A549 (cell line): ENCODE measurements at regions of chr16 and their contacts with region 1.

Region 1: GRCh38 chr16:46929378-46930332 is 43.8 kb downstream of the DNAJA2 start:
- DNase-seq: peak; percentile 62 to 81
- ATAC-seq: peak; percentile 86 to 96
- H3K4me3 ChIP-seq: no peak overlapping the region
- H3K27ac ChIP-seq: no peak overlapping the region
- H3K4me1 ChIP-seq: no peaks in the 10 kb centered on the region
- CTCF ChIP-seq: peak; percentile 83
- EP300 ChIP-seq: no peak
- POLR2A ChIP-seq: no peak
- RAD21 ChIP-seq: peak; percentile 67 to 68

Region 2: GRCh38 chr16:46862555-46863447 is 66.9 kb before region 1 on chr16:
- CTCF ChIA-PET with region 1: interaction called, 13 read pairs
- POLR2A ChIA-PET with region 1: no interaction called
- DNase-seq: no peak
- ATAC-seq: no peak
- H3K4me3 ChIP-seq: no peak overlapping the region
- H3K27ac ChIP-seq: no peak overlapping the region
- H3K4me1 ChIP-seq: peaks cover 24% of the 10 kb centered on the region
- CTCF ChIP-seq: no peak
- EP300 ChIP-seq: no peak
- POLR2A ChIP-seq: no peak
- RAD21 ChIP-seq: no peak

Region 3: DNA sequence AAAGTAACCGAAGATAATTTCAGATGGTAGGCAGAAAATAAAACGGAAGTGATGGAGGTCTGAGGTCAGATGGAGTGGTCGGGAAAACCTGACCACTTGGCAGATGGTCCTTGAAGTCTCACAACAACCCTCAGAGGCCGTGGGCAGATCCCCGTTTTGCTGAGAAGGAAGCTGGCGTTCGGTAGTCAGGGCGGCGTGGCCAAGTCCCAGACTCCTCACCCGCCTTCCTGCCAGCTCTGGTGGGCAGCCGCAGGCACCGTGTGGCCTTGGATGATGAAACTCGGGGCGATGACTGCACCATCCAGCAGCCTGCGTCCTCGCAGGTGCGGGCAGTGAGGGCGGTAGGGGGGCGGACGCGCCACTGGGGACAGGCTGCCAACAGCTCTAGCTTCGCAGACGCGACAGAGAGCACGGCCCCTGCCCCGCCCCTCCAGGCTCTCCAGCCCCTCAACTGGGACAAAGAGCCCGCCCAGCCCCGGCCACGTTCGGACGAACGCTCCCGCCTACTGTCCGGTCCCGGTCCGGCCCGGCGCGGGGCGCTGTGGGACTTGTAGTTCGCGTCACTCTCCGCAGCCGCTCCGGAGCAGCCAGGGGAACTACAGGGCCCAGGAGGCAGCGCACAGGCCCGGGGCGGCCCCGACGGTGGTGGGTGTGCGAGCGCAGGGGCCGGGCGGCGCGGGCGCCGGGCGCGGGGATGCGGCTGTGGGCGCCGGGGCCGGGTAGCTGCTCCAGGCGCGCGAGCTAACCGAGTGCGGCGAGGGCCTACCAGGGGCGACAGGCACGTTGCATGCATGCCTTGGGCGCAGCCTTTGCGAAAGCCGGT is 45.8 kb before region 1 on chr16 and contains the start of gene GPT2:
- CTCF ChIA-PET with region 1: interaction called, 14 read pairs
- POLR2A ChIA-PET with region 1: no interaction called
- DNase-seq: peak; percentile 80 to 95
- ATAC-seq: peak; percentile 95 to 99
- H3K4me3 ChIP-seq: peak within 1 kb of the TSS; percentile 62
- H3K27ac ChIP-seq: peak within 1 kb of the TSS; percentile 88 to 92
- H3K4me1 ChIP-seq: peaks cover 18% of the 10 kb centered on the region; the same call in 2 of the 3 replicates
- CTCF ChIP-seq: no peak
- EP300 ChIP-seq: no peak
- POLR2A ChIP-seq: peak; percentile 73
- RAD21 ChIP-seq: no peak
- polyA plus RNA-seq, gene GPT2: 14.4 and 15.3 TPM in 2 replicates

Region 4: GRCh38 chr16:46899443-46900143 is 30.1 kb before region 1 on chr16:
- CTCF ChIA-PET with region 1: interaction called, 22 read pairs
- POLR2A ChIA-PET with region 1: no interaction called
- DNase-seq: no peak
- ATAC-seq: no peak
- H3K4me3 ChIP-seq: no peak overlapping the region
- H3K27ac ChIP-seq: no peak overlapping the region
- H3K4me1 ChIP-seq: no peaks in the 10 kb centered on the region
- CTCF ChIP-seq: no peak
- EP300 ChIP-seq: no peak
- POLR2A ChIP-seq: no peak
- RAD21 ChIP-seq: no peak

Region 5: GRCh38 chr16:46908540-46909372 is 20.9 kb before region 1 on chr16:
- CTCF ChIA-PET with region 1: interaction called, 26 read pairs
- POLR2A ChIA-PET with region 1: no interaction called
- DNase-seq: peak; percentile 60 to 71
- ATAC-seq: peak; percentile 45 to 88; a peak in 3 of 6 replicates
- H3K4me3 ChIP-seq: no peak overlapping the region
- H3K27ac ChIP-seq: no peak overlapping the region
- H3K4me1 ChIP-seq: no peaks in the 10 kb centered on the region
- CTCF ChIP-seq: peak; percentile 90
- EP300 ChIP-seq: no peak
- POLR2A ChIP-seq: no peak
- RAD21 ChIP-seq: peak; percentile 67 to 77

Region 6: GRCh38 chr16:46918861-46919792 is 10.5 kb before region 1 on chr16:
- CTCF ChIA-PET with region 1: interaction called, 73 read pairs
- POLR2A ChIA-PET with region 1: no interaction called
- DNase-seq: no peak
- ATAC-seq: no peak; a peak in 1 of 6 replicates
- H3K4me3 ChIP-seq: no peak overlapping the region
- H3K27ac ChIP-seq: no peak overlapping the region
- H3K4me1 ChIP-seq: no peaks in the 10 kb centered on the region
- CTCF ChIP-seq: no peak
- EP300 ChIP-seq: no peak
- POLR2A ChIP-seq: no peak
- RAD21 ChIP-seq: no peak

Region 7: DNA sequence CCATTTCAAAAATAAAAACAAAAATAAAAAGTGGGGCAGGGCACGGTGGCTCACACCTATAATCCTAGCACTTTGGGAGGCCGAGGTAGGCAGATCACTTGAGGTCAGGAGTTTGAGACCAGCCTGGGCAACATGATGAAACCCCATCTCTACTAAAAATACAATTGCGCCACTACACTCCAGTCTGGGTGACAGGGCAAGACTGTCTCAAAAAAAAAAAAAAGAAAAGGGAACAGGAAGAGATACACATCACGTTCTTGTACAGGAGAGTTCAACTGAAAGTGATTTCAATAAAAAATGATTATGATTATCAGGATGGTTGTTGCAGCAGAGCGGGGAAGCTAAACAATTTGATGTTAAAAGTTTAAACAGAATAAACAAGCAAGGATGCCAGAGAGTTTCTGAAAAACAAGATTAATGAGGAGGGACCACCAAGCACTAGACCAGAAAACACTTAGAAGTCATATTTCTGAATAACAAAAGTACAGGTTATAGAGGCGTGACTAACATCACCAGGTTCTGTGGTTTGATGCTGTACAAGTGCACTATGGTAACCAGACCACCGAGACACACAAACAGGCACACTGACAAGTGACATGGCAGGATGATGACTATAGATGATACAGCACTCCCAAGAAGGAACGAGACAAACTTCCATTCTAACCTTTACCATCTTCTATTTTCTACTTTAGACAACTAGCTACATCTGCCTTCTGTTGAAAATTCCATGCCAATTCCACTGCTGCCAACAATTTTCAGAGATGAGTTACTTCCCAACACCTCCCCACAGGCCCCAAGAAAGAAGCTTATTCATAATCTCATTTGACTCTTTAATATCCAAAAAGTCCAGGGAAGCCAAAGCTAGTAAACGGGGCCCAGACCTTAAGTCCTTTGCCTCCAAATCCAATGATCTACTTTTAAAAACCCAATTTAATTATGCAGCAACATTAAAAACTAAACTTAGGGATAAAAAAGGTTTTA is 32.0 kb after region 1 on chr16:
- CTCF ChIA-PET with region 1: interaction called, 11 read pairs
- POLR2A ChIA-PET with region 1: no interaction called
- DNase-seq: no peak
- ATAC-seq: no peak
- H3K4me3 ChIP-seq: no peak overlapping the region
- H3K27ac ChIP-seq: peak overlapping the region in 1 of 2 experiments; percentile 58; a peak in 2 of 6 replicates
- H3K4me1 ChIP-seq: peaks cover 16% of the 10 kb centered on the region; the same call in 2 of the 3 replicates
- CTCF ChIP-seq: no peak
- EP300 ChIP-seq: no peak
- POLR2A ChIP-seq: no peak
- RAD21 ChIP-seq: no peak

Region 8: DNA sequence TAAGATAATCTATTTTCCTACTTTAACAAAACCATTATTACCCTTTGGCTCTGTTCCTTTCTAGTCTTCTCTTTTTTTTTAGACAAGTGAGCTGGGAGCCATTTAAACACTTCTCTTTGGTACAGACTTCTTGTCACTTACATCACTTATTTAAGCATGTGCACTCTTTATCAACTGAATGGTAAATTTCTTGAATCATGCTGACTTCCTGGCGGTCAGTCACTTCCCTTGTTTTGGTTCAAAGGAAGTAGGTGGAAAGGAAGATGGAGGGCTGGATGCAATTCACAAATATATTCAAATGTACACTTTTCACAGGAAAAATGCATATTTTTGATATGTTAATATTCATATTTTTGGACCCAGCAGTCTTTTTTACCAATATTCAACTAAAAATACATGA is 434.1 kb after region 1 on chr16:
- CTCF ChIA-PET with region 1: no interaction called
- POLR2A ChIA-PET with region 1: no interaction called
- DNase-seq: no peak
- ATAC-seq: no peak
- H3K4me3 ChIP-seq: no peak overlapping the region
- H3K27ac ChIP-seq: no peak overlapping the region
- H3K4me1 ChIP-seq: peaks cover 2% of the 10 kb centered on the region; the same call in 1 of the 3 replicates
- CTCF ChIP-seq: no peak
- EP300 ChIP-seq: no peak
- POLR2A ChIP-seq: no peak
- RAD21 ChIP-seq: no peak